ENCODE measurements at regions of chr3 and their contacts with region 1.

Region 1: GRCh38 chr3:12484198-12484974 is at the start of gene TSEN2:
- DNase-seq: peak; percentile 99
- H3K4me3 Mint-ChIP-seq: peak within 1 kb of the TSS; percentile 94
- H3K27ac Mint-ChIP-seq: peak within 1 kb of the TSS; percentile 97
- H3K4me1 Mint-ChIP-seq: peaks cover 25% of the 10 kb centered on the region
- H3K27me3 Mint-ChIP-seq: no peaks in the 10 kb centered on the region
- total RNA-seq, gene TSEN2: 30.5 and 39.3 TPM in 2 replicates

Region 2: GRCh38 chr3:11846281-11847034 is 637.9 kb before region 1 on chr3 and contains the start of gene TAMM41:
- intact Hi-C with region 1: loop called (anchors 2 kb)
- DNase-seq: peak; percentile 96
- H3K4me3 Mint-ChIP-seq: peak within 1 kb of the TSS; percentile 96
- H3K27ac Mint-ChIP-seq: peak within 1 kb of the TSS; percentile 94
- H3K4me1 Mint-ChIP-seq: peaks cover 19% of the 10 kb centered on the region
- H3K27me3 Mint-ChIP-seq: no peaks in the 10 kb centered on the region
- total RNA-seq, gene TAMM41: 34.2 and 35.6 TPM in 2 replicates

Region 3: GRCh38 chr3:12175844-12176453 is 308.4 kb before region 1 on chr3:
- intact Hi-C with region 1: loop called (anchors 2 kb)
- DNase-seq: peak; percentile 72
- H3K4me3 Mint-ChIP-seq: no peak overlapping the region
- H3K27ac Mint-ChIP-seq: no peak overlapping the region
- H3K4me1 Mint-ChIP-seq: peaks cover 15% of the 10 kb centered on the region
- H3K27me3 Mint-ChIP-seq: no peaks in the 10 kb centered on the region

Region 4: GRCh38 chr3:12395349-12396012 is 88.9 kb before region 1 on chr3:
- intact Hi-C with region 1: loop called (anchors 5 kb)
- DNase-seq: peak; percentile 67
- H3K4me3 Mint-ChIP-seq: peak overlapping the region; percentile 45
- H3K27ac Mint-ChIP-seq: peak overlapping the region; percentile 73
- H3K4me1 Mint-ChIP-seq: peaks cover 9% of the 10 kb centered on the region
- H3K27me3 Mint-ChIP-seq: peaks cover 11% of the 10 kb centered on the region

Region 5: GRCh38 chr3:12440927-12441326 is 43.5 kb before region 1 on chr3:
- intact Hi-C with region 1: no loop called
- DNase-seq: no peak
- H3K4me3 Mint-ChIP-seq: no peak overlapping the region
- H3K27ac Mint-ChIP-seq: no peak overlapping the region
- H3K4me1 Mint-ChIP-seq: no peaks in the 10 kb centered on the region
- H3K27me3 Mint-ChIP-seq: peaks cover 8% of the 10 kb centered on the region

Region 6: DNA sequence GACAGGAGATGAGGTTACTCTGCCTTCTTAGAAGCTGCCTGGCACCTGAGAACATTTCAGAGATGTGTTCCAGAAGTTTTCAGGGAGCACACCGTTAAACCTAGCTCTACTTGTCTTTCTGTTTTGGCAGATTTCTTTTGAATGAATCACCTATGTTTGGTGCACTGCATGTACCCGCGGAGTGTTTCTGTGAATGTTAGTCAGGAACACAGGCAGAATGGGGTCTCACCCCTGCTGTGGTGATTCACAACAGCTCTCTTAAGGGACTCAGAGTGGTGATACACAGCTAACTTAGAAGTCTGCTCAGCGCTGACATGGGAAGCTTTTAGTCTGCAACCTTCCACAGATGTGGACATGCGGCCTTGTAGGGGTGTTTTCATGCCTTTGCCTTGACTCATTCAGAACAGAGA is 23.9 kb after region 1 on chr3:
- intact Hi-C with region 1: no loop called
- DNase-seq: no peak
- H3K4me3 Mint-ChIP-seq: no peak overlapping the region
- H3K27ac Mint-ChIP-seq: no peak overlapping the region
- H3K4me1 Mint-ChIP-seq: no peaks in the 10 kb centered on the region
- H3K27me3 Mint-ChIP-seq: no peaks in the 10 kb centered on the region

Region 7: GRCh38 chr3:12663936-12664908 is 179.8 kb after region 1 on chr3 and contains the start of gene RAF1:
- intact Hi-C with region 1: loop called (anchors 1 kb)
- DNase-seq: peak; percentile 99
- H3K4me3 Mint-ChIP-seq: peak within 1 kb of the TSS; percentile 88
- H3K27ac Mint-ChIP-seq: peak within 1 kb of the TSS; percentile 99
- H3K4me1 Mint-ChIP-seq: peaks cover 28% of the 10 kb centered on the region
- H3K27me3 Mint-ChIP-seq: no peaks in the 10 kb centered on the region
- total RNA-seq, gene RAF1: 90.5 and 93.2 TPM in 2 replicates